Left ventricle myocardium inferior (tissue), 1 donor: ENCODE measurements at regions of chr1 and their contacts with region 1.

Region 1: GRCh38 chr1:231357831-231358354 is 19.8 kb downstream of the SPRTN start:
- DNase-seq: no peak
- H3K4me3 ChIP-seq: no peak overlapping the region
- H3K27ac ChIP-seq: peak overlapping the region; percentile 41
- H3K4me1 ChIP-seq: peaks cover 25% of the 10 kb centered on the region
- H3K27me3 ChIP-seq: no peaks in the 10 kb centered on the region
- CTCF ChIP-seq: peak; percentile 80

Region 2: DNA sequence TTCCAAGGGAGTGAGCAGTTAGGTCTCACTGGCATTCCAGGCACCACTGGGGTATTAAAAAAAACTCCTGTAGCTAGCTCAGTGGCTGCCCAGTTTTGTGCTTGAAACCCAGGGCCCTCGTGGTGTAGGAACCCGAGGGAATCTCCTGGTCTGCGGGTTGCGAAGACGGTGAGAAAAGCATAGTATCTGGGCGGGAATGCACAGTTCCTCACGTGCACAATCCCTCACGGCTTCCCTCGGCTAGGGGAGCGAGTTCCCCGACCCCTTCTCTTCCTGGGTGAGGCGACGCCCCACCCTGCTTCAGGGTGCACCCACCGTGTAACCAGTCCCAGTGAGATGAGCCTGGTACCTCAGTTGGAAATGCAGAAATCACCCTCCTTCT is 881.3 kb before region 1 on chr1:
- intact Hi-C with region 1: no loop called
- DNase-seq: no peak
- H3K4me3 ChIP-seq: no peak overlapping the region
- H3K27ac ChIP-seq: no peak overlapping the region
- H3K4me1 ChIP-seq: no peaks in the 10 kb centered on the region
- H3K27me3 ChIP-seq: peaks cover 27% of the 10 kb centered on the region
- CTCF ChIP-seq: no peak

Region 3: GRCh38 chr1:231584921-231585320 is 227.0 kb after region 1 on chr1:
- intact Hi-C with region 1: loop called (anchors 5 kb)
- DNase-seq: no peak
- H3K4me3 ChIP-seq: no peak overlapping the region
- H3K27ac ChIP-seq: peak overlapping the region; percentile 10
- H3K4me1 ChIP-seq: peaks cover 8% of the 10 kb centered on the region
- H3K27me3 ChIP-seq: no peaks in the 10 kb centered on the region
- CTCF ChIP-seq: no peak

Region 4: GRCh38 chr1:231603598-231604275 is 245.8 kb after region 1 on chr1:
- intact Hi-C with region 1: loop called (anchors 5 kb)
- DNase-seq: no peak
- H3K4me3 ChIP-seq: peak overlapping the region; percentile 62
- H3K27ac ChIP-seq: peak overlapping the region; percentile 76
- H3K4me1 ChIP-seq: peaks cover 41% of the 10 kb centered on the region
- H3K27me3 ChIP-seq: no peaks in the 10 kb centered on the region
- CTCF ChIP-seq: peak; percentile 85